Psoas muscle (tissue), 8 donors: ENCODE measurements at regions of chr17 and their contacts with region 1.

Region 1: GRCh38 chr17:78112518-78113226 is 15.9 kb downstream of the TMC6 start:
- DNase-seq: peak; percentile 78 to 89
- ATAC-seq: peak; percentile 62 to 79 (median 74)
- H3K4me3 ChIP-seq: no peak overlapping the region
- H3K27ac ChIP-seq: no peak overlapping the region
- H3K4me1 ChIP-seq: peaks cover 30% of the 10 kb centered on the region
- H3K27me3 ChIP-seq: peaks cover 0 to 2% (median 0%) of the 10 kb centered on the region in 3 donors
- CTCF ChIP-seq: peak; percentile 99

Region 2: GRCh38 chr17:78019367-78019975 is 93.2 kb before region 1 on chr17:
- intact Hi-C with region 1: loop called in 1 of 2 experiments (anchors 5 kb)
- DNase-seq: no peak
- ATAC-seq: peak in 2 of 4 donors; percentile 41 to 65
- H3K4me3 ChIP-seq: no peak overlapping the region
- H3K27ac ChIP-seq: peak overlapping the region; percentile 62
- H3K4me1 ChIP-seq: peaks cover 21% of the 10 kb centered on the region
- H3K27me3 ChIP-seq: no peaks in the 10 kb centered on the region
- CTCF ChIP-seq: peak; percentile 71

Region 3: DNA sequence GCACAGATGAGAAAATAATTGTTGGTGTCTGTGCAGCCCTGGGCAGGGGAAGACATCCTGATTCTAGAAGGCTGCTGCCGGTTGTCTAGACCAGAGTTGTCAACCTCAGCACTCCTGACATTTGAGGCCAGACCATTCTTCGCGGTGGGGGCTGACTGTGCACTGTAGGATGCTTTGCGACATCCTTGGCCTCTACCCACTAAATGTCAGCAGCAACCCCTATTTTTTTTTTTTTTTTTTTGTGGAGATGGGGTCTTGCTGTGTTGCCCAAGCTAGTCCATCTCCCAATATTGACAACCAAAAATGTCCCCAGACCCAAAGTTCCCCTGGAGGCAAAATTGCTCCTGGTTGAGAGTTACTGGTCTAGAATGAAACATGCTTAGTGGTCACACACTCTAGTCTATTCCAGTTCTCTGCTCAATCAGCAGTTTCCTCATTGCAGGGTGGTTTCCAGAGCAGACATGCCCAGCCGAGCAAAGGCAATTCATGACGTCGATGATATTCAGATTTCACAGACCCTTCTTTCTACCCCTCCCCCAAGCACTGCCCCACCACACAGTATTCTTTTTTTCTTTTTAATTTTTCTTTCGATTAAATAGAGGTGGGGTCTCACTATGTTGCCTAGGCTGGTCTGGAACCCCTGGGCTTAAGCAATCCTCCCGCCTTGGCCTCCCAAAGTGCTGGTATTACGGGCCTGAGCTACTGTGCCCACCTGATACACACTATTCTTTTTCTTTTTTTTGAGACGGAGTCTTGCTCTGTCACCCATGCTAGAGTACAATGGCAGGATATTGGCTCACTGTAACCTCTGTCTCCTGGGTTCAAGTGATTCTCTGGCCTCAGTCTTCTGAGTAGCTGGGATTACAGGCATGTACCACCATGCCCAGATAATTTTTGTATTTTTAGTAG is 42.5 kb after region 1 on chr17:
- intact Hi-C with region 1: no loop called
- DNase-seq: no peak
- ATAC-seq: no peak
- H3K4me3 ChIP-seq: no peak overlapping the region
- H3K27ac ChIP-seq: no peak overlapping the region
- H3K4me1 ChIP-seq: no peaks in the 10 kb centered on the region
- H3K27me3 ChIP-seq: no peaks in the 10 kb centered on the region
- CTCF ChIP-seq: no peak

Region 4: DNA sequence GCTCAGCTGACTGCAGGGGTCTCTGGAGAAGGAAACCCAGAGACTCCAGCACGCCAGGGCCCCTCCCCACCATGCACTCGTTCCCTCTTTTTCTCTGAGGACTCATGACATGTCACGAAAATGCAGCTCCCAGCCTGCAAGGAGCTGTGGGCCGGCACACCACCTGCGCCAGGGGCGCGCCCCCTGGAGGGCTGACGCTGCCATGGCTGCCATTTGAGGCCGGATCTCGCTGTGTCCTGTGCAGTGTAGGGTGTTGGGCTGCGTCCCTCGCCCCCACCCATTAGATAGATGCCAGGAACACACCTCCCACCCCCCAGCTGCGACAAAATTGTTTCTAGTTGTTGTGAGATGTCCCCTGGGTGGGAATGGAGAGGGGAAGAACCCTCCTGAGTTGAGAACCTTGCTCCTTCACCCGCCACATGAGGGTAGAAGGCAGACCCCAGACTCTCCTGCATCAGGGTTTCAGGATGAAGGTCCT is 63.9 kb after region 1 on chr17:
- intact Hi-C with region 1: loop called (anchors 2 kb)
- DNase-seq: peak; percentile 74 to 85
- ATAC-seq: peak in 3 of 4 donors; percentile 15 to 38 (median 20)
- H3K4me3 ChIP-seq: no peak overlapping the region
- H3K27ac ChIP-seq: peak overlapping the region; percentile 98
- H3K4me1 ChIP-seq: peaks cover 65% of the 10 kb centered on the region
- H3K27me3 ChIP-seq: no peaks in the 10 kb centered on the region
- CTCF ChIP-seq: peak; percentile 84

Region 5: DNA sequence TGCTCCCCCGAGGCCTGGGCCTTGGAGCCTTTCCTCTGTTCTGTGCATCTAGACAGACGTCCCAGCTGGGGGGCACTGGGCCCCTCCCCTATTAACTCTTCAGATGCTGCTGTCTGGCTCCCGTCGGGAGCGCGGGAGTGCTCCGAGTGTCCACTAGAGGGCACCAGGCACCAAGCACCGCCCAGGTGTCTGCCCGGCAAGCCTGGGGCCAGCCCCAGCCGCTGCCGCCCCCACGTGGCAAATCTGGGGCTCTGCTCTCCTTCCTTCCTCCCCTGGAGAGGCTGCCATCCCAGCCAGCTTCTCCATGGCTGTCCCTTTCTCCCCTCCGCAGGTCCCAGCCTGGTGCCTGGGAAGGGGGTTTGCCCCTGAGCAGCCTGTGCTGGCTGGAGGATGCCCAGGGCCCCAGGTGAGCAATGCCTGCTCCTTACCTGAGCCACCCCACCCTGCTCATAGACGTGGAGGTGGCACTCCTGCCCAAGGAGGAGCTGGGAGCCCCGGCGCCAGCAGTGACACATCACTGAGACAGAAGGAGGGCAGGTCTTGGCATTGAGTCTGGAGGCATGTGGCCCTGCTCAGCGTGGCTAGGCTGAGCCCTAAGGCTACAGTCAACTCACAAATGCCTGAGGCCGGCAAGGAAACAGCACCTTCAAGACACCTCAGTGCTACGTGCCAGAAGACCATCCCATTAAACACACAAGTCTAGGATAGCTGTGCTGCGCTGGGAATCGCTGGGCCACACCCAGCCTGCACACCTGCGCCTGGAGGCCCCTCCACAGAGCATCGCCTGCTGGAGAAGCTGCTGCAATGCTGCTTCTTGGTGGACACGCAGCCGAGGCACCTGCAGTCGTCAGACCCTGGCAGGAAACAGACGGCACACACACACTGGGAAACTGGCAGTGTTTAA is 138.5 kb after region 1 on chr17:
- intact Hi-C with region 1: loop called (anchors 2 to 5 kb)
- DNase-seq: peak; percentile 87 to 93
- ATAC-seq: peak; percentile 83 to 88 (median 86)
- H3K4me3 ChIP-seq: peak overlapping the region; percentile 4
- H3K27ac ChIP-seq: no peak overlapping the region
- H3K4me1 ChIP-seq: peaks cover 13% of the 10 kb centered on the region
- H3K27me3 ChIP-seq: no peaks in the 10 kb centered on the region
- CTCF ChIP-seq: peak; percentile 100

Region 6: GRCh38 chr17:78421484-78422266 is 309.0 kb after region 1 on chr17:
- intact Hi-C with region 1: loop called in 1 of 2 experiments (anchors 10 kb)
- DNase-seq: peak; percentile 75 to 85
- ATAC-seq: peak; percentile 79 to 90 (median 86)
- H3K4me3 ChIP-seq: no peak overlapping the region
- H3K27ac ChIP-seq: peak overlapping the region; percentile 7
- H3K4me1 ChIP-seq: peaks cover 16% of the 10 kb centered on the region
- H3K27me3 ChIP-seq: no peaks in the 10 kb centered on the region
- CTCF ChIP-seq: peak; percentile 100